Activated T-helper 1 cell treated with anti-CD3 and anti-CD28 coated beads, Interleukin-12 subunit alpha, Interleukin-12 subunit beta, Interleukin-2, Interleukin-4 antibody, amounts not matched to agents 30 ng/mL and 10 ng/mL and 1 ng/mL, durations not matched to agents 14 hours and 24 hours and 36 hours (primary cell): ENCODE measurements at regions of chr6 and their contacts with region 1.

Region 1: GRCh38 chr6:11366183-11366933 is 133.9 kb upstream of the NEDD9 start:
- DNase-seq: peak; percentile 60
- H3K4me3 Mint-ChIP-seq: peak overlapping the region; percentile 55
- H3K27ac Mint-ChIP-seq: peak overlapping the region; percentile 92
- H3K4me1 Mint-ChIP-seq: peaks cover 95% of the 10 kb centered on the region
- H3K27me3 Mint-ChIP-seq: no peaks in the 10 kb centered on the region

Region 2: DNA sequence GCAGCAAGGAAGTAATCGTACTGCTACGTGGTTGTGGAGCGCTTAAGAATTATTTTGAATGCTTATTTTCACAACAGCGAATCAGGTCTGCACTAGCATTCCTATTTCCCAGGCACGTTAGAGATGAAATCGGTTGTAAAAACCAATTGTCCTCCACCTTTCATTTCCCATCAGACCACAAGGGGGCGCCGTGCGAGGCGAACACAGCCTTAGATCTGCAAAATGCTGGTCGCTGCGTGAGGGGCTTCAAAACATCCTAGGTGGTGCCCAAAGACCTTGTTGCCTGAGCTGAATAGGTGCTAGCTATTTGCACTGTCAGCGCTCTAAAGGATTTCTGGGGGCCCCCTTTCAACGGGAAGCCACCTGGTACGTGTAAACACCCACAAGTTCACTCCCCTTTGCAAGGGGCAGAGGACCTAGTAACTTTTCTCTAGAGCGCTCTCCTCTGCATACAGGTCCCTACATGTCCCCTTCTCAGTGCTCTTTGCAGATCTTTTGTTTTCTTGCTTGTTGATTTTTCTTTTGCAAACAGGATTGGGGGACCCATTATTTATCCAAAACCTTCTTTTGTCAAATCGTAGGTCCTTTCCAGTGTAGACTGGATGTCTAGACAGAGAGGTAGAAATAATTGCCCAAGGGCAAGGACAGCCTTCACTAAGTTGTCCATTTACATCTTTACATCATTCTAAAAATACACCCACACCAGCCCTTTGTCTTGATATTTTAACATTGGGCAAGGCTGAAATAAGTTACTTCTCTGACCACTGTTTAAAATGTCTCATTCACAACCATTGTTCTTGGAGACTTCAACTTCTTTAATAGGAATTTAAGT is 193.6 kb before region 1 on chr6:
- intact Hi-C with region 1: loop called (anchors 1 kb)
- DNase-seq: peak; percentile 47
- H3K4me3 Mint-ChIP-seq: no peak overlapping the region
- H3K27ac Mint-ChIP-seq: no peak overlapping the region
- H3K4me1 Mint-ChIP-seq: peaks cover 25% of the 10 kb centered on the region
- H3K27me3 Mint-ChIP-seq: peaks cover 3% of the 10 kb centered on the region

Region 3: GRCh38 chr6:11317885-11318771 is 48.2 kb before region 1 on chr6:
- intact Hi-C with region 1: loop called (anchors 1 kb)
- DNase-seq: peak; percentile 63
- H3K4me3 Mint-ChIP-seq: no peak overlapping the region
- H3K27ac Mint-ChIP-seq: peak overlapping the region; percentile 92
- H3K4me1 Mint-ChIP-seq: peaks cover 64% of the 10 kb centered on the region
- H3K27me3 Mint-ChIP-seq: no peaks in the 10 kb centered on the region

Region 4: DNA sequence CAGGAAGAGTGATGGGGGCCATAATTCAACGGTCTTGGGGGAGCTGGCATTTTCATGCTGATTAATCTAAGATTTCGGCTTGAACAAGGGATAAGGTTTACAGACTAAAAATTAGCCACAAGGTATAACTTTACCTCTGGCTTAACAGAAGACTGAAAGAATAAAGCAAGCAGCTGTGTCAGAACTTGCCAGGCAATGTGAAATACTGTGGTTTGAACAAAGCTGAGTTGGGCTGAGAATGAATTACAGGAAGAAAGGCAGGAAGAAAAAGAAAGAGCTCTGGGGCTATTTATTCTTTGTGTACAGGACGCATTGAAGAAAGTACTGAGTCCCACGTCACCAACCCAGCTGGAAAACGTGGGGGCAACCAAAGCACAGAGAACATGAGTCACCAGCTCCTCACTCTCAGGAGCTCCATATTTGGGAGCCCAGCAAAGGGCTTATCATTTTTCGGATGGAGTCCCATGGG is 12.4 kb before region 1 on chr6:
- intact Hi-C with region 1: loop called (anchors 1 kb)
- DNase-seq: peak; percentile 58
- H3K4me3 Mint-ChIP-seq: peak overlapping the region; percentile 74
- H3K27ac Mint-ChIP-seq: peak overlapping the region; percentile 93
- H3K4me1 Mint-ChIP-seq: peaks cover 90% of the 10 kb centered on the region
- H3K27me3 Mint-ChIP-seq: no peaks in the 10 kb centered on the region

Region 5: DNA sequence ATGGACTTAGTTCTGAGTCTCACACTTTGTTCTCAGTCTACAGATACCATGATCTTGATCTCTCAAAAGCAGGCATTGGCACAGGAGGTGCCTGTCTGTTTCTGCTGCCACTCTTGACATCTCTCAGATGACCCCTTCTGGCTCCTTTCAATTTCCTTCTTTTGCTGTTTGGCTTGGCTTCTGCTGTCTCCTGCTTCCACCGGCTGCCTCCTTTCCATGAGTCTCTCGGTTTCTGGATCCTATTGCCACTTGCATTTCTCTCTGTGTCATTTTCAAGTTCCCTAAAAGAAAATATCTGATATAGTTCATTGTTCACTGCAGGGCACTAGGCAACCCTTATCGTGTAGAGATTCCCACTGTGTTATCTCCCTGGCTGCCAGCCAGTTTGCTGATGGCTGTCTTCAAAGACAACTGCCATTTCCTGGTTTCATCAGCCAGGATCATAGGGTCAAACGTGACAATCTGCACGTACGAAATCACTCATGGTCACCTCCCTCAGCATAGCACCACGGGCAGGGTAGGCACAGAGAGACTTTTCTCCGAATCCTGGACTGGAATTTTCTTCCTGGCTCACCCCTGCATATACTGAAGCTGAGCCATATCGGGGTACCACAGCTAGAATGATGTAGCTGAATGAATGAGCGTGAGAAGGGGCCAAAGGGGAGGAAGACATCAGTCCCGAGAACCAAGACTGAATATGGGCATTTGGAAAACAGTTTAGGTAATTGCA is 26.6 kb after region 1 on chr6:
- intact Hi-C with region 1: no loop called
- DNase-seq: no peak
- H3K4me3 Mint-ChIP-seq: no peak overlapping the region
- H3K27ac Mint-ChIP-seq: no peak overlapping the region
- H3K4me1 Mint-ChIP-seq: peaks cover 15% of the 10 kb centered on the region
- H3K27me3 Mint-ChIP-seq: peaks cover 4% of the 10 kb centered on the region

Region 6: GRCh38 chr6:11424395-11425050 is 58.2 kb after region 1 on chr6:
- intact Hi-C with region 1: loop called (anchors 1 kb)
- DNase-seq: no peak
- H3K4me3 Mint-ChIP-seq: no peak overlapping the region
- H3K27ac Mint-ChIP-seq: peak overlapping the region; percentile 7
- H3K4me1 Mint-ChIP-seq: peaks cover 63% of the 10 kb centered on the region
- H3K27me3 Mint-ChIP-seq: no peaks in the 10 kb centered on the region